ENCODE measurements at regions of chr12 and their contacts with region 1.

Region 1: GRCh38 chr12:81627336-81628189 is 131.6 kb downstream of the PPFIA2 start:
- DNase-seq: no peak
- H3K4me3 ChIP-seq: no peak overlapping the region
- H3K27ac ChIP-seq: no peak overlapping the region
- H3K4me1 ChIP-seq: no peaks in the 10 kb centered on the region
- H3K27me3 ChIP-seq: no peaks in the 10 kb centered on the region
- CTCF ChIP-seq: peak in 3 of 4 experiments; percentile 29 to 67 (median 51)
- EP300 ChIP-seq: no peak
- POLR2A ChIP-seq: no peak

Region 2: DNA sequence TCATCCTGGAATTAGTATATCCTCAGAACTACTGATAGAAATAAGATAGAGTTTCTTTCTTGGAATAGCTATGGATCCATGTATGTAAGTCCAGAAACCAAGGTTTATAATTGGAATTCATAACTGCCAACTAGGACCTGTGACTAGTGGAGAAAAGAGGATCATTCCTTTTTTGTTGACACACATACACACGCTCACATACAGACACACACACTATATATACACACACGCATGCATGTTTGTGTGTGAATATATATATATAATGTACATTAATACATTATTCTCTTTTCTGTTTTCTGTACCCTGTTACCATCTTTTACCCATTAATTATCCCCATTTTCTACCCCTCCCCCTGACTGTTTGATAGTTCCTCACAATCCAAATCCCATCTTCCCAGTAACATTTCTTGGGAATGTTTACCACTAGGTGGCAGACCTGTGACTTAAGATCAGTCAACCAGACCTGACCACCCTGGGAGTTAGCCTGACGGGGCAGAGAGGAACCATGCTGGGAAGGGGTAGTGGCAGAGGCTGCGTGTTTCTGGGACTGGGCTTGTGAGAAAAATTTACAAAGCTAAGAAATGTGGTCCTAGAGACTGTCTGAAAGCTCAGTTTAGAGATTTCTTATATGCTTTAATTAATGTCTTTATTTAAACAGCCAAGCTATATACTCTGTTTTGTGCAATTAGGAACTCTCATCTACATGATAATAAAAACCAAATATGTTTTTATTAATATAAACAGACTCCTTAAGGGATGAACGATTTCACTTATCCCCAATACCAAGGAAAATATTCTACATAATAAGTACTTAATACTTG is 176.4 kb before region 1 on chr12:
- intact Hi-C with region 1: loop called (anchors 2 kb)
- DNase-seq: no peak
- H3K4me3 ChIP-seq: no peak overlapping the region
- H3K27ac ChIP-seq: no peak overlapping the region
- H3K4me1 ChIP-seq: no peaks in the 10 kb centered on the region
- H3K27me3 ChIP-seq: no peaks in the 10 kb centered on the region
- CTCF ChIP-seq: peak; percentile 11 to 55 (median 37)
- EP300 ChIP-seq: no peak
- POLR2A ChIP-seq: no peak

Region 3: GRCh38 chr12:81585787-81586186 is 41.8 kb before region 1 on chr12:
- intact Hi-C with region 1: no loop called
- DNase-seq: no peak
- H3K4me3 ChIP-seq: no peak overlapping the region
- H3K27ac ChIP-seq: no peak overlapping the region
- H3K4me1 ChIP-seq: no peaks in the 10 kb centered on the region
- H3K27me3 ChIP-seq: no peaks in the 10 kb centered on the region
- CTCF ChIP-seq: no peak
- EP300 ChIP-seq: no peak
- POLR2A ChIP-seq: no peak